ENCODE measurements at regions of chr1 and their contacts with region 1.

Region 1: DNA sequence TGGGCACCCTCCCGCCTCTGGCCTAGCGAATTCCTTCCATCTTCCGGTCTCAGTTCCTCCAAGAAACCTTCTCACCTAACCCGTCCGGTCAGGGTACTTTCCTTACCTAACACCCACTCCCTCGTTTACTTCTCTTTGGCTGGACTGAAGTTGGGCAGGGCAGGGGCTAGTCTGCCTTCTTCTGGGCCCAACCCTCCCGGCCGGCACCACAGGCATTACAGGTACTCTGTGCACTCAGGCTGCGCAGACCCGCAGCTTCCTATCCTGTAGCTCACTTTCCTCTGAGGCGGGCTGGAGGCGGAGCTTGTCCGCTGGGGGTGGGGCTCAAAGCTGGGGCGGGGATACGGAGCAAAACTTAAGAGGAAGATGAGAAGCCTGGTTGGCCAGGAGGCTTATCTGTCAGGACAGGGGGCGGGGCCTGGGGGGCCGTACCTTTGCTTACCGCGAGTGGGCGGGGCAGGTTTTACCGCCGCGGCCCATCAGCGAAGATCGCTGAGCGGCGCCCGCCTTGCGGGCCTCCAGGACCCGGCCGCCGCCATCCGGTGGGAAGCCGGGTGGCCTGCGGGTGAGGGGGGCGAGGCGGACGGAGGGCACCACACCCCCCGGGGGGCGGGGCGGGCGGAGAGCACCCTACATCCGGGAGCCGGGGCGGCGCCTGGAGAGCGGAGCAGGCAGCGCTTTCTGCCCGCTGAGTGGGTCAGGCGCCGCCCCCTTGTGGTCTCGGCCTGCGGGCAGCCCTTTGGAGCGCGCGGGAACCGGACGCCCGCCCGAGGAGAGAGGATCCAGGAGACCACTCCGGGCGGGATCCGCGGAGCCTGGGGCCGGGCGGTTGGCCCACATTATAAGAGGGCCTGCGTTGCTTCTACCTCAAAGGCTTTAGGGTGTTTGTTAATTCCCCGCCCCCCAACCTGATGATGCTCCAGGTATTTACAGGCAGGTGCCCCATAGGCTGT is 31.9 kb downstream of the ZNF648 start:
- DNase-seq: peak; percentile 96 to 99 (median 98)
- ATAC-seq: peak; percentile 91
- H3K4me3 ChIP-seq: peak overlapping the region; percentile 76
- H3K4me3 Mint-ChIP-seq: peak overlapping the region; percentile 90
- H3K27ac ChIP-seq: peak overlapping the region; percentile 72 to 81
- H3K27ac Mint-ChIP-seq: peak overlapping the region; percentile 84
- H3K4me1 ChIP-seq: peaks cover 13% of the 10 kb centered on the region
- H3K4me1 Mint-ChIP-seq: peaks cover 16% of the 10 kb centered on the region
- H3K27me3 ChIP-seq: no peaks in the 10 kb centered on the region
- H3K27me3 Mint-ChIP-seq: no peaks in the 10 kb centered on the region
- CTCF ChIP-seq: peak; percentile 45

Region 2: GRCh38 chr1:180154325-180155181 is 1875.1 kb before region 1 on chr1 and contains the start of gene QSOX1:
- CTCF ChIA-PET with region 1: no interaction called
- POLR2A ChIA-PET with region 1: no interaction called
- intact Hi-C with region 1: loop called in 1 of 2 experiments (anchors 10 kb)
- DNase-seq: peak; percentile 80 to 97 (median 86)
- ATAC-seq: peak; percentile 97
- H3K4me3 ChIP-seq: peak within 1 kb of the TSS; percentile 90
- H3K4me3 Mint-ChIP-seq: peak within 1 kb of the TSS; percentile 95
- H3K27ac ChIP-seq: peak within 1 kb of the TSS; percentile 19 to 42
- H3K27ac Mint-ChIP-seq: peak within 1 kb of the TSS; percentile 82
- H3K4me1 ChIP-seq: peaks cover 27% of the 10 kb centered on the region
- H3K4me1 Mint-ChIP-seq: peaks cover 33% of the 10 kb centered on the region
- H3K27me3 ChIP-seq: no peaks in the 10 kb centered on the region
- H3K27me3 Mint-ChIP-seq: no peaks in the 10 kb centered on the region
- CTCF ChIP-seq: no peak
- total RNA-seq, gene QSOX1: 13.7 to 14.3 TPM

Region 3: DNA sequence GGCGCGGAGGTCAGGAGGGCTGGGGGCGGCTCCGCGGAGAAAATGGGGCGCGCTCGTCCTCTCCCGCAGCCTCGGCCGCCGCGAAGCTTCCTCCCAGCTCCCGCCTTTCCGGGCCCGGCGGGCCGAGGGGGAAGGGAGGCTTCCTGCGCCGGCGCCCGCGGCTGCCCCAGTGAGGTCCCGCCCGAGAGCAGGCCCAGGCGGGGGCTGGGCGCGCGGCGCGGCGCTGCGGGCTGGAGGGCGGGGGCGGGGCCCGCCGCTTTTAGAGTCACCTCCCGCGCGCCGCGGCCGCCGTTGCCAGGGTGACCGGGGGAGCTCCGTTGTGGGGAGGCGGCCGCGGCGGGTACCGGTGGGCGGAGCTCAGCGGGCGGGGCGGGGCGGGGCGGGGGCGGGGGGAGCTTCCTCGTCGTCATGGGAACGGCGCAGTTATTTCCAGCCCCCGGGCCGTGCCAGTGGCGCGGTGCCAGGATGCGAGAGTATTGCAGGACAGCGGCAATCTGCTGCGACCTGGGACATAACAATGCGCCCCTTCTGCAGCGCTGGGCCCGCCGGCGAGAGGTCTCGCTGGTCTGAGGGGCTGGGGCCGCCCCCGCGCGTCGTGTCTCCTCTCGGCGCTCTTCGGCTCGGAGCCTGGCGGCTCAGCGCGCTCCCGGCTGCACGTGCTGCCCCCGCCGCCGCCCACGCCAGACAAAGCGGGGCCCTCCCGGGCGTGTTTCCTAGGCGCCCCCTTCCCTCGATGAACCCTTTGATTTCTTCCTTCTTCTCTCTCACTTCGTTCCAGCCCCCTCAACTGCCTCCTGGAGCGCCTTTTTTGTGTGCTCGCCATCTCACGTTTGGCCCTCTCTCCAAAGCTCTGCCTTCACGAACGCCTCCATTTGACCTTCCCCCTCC is 924.3 kb before region 1 on chr1:
- CTCF ChIA-PET with region 1: no interaction called
- POLR2A ChIA-PET with region 1: no interaction called
- intact Hi-C with region 1: loop called in 1 of 2 experiments (anchors 10 kb)
- DNase-seq: peak; percentile 86 to 97 (median 94)
- ATAC-seq: peak; percentile 88
- H3K4me3 ChIP-seq: peak overlapping the region; percentile 80
- H3K4me3 Mint-ChIP-seq: peak overlapping the region; percentile 88
- H3K27ac ChIP-seq: peak overlapping the region; percentile 58 to 72
- H3K27ac Mint-ChIP-seq: peak overlapping the region; percentile 67
- H3K4me1 ChIP-seq: peaks cover 49% of the 10 kb centered on the region
- H3K4me1 Mint-ChIP-seq: peaks cover 60% of the 10 kb centered on the region
- H3K27me3 ChIP-seq: no peaks in the 10 kb centered on the region
- H3K27me3 Mint-ChIP-seq: no peaks in the 10 kb centered on the region
- CTCF ChIP-seq: peak; percentile 1

Region 4: GRCh38 chr1:182003953-182004586 is 25.6 kb before region 1 on chr1:
- CTCF ChIA-PET with region 1: no interaction called
- POLR2A ChIA-PET with region 1: no interaction called
- intact Hi-C with region 1: no loop called
- DNase-seq: no peak
- ATAC-seq: no peak
- H3K4me3 ChIP-seq: no peak overlapping the region
- H3K4me3 Mint-ChIP-seq: no peak overlapping the region
- H3K27ac ChIP-seq: no peak overlapping the region
- H3K27ac Mint-ChIP-seq: no peak overlapping the region
- H3K4me1 ChIP-seq: no peaks in the 10 kb centered on the region
- H3K4me1 Mint-ChIP-seq: no peaks in the 10 kb centered on the region
- H3K27me3 ChIP-seq: no peaks in the 10 kb centered on the region
- H3K27me3 Mint-ChIP-seq: peaks cover 39% of the 10 kb centered on the region
- CTCF ChIP-seq: no peak

Region 5: GRCh38 chr1:182588500-182589452 is 559.1 kb after region 1 on chr1 and contains the start of gene RNASEL:
- CTCF ChIA-PET with region 1: no interaction called
- POLR2A ChIA-PET with region 1: interaction called, 3 read pairs
- intact Hi-C with region 1: loop called in 1 of 2 experiments (anchors 5 kb)
- DNase-seq: peak; percentile 28 to 85 (median 54)
- ATAC-seq: peak; percentile 85
- H3K4me3 ChIP-seq: peak within 1 kb of the TSS; percentile 83
- H3K4me3 Mint-ChIP-seq: peak within 1 kb of the TSS; percentile 95
- H3K27ac ChIP-seq: peak within 1 kb of the TSS; percentile 89 to 97
- H3K27ac Mint-ChIP-seq: peak within 1 kb of the TSS; percentile 99
- H3K4me1 ChIP-seq: peaks cover 28% of the 10 kb centered on the region
- H3K4me1 Mint-ChIP-seq: peaks cover 52% of the 10 kb centered on the region
- H3K27me3 ChIP-seq: no peaks in the 10 kb centered on the region
- H3K27me3 Mint-ChIP-seq: no peaks in the 10 kb centered on the region
- CTCF ChIP-seq: no peak
- total RNA-seq, gene RNASEL: 3.5 to 3.7 TPM

Region 6: GRCh38 chr1:182839209-182840065 is 809.8 kb after region 1 on chr1 and contains the start of gene DHX9:
- CTCF ChIA-PET with region 1: no interaction called
- POLR2A ChIA-PET with region 1: no interaction called
- intact Hi-C with region 1: loop called in 1 of 2 experiments (anchors 10 kb)
- DNase-seq: peak; percentile 92 to 99 (median 96)
- ATAC-seq: peak; percentile 83
- H3K4me3 ChIP-seq: peak within 1 kb of the TSS; percentile 66
- H3K4me3 Mint-ChIP-seq: peak within 1 kb of the TSS; percentile 92
- H3K27ac ChIP-seq: peak within 1 kb of the TSS; percentile 85 to 87
- H3K27ac Mint-ChIP-seq: peak within 1 kb of the TSS; percentile 90
- H3K4me1 ChIP-seq: peaks cover 26% of the 10 kb centered on the region
- H3K4me1 Mint-ChIP-seq: peaks cover 54% of the 10 kb centered on the region
- H3K27me3 ChIP-seq: no peaks in the 10 kb centered on the region
- H3K27me3 Mint-ChIP-seq: no peaks in the 10 kb centered on the region
- CTCF ChIP-seq: peak; percentile 31
- total RNA-seq, gene DHX9: 338 to 353 TPM